Mammary epithelial cell (primary cell): ENCODE measurements at regions of chr1 and their contacts with region 1.

Region 1: DNA sequence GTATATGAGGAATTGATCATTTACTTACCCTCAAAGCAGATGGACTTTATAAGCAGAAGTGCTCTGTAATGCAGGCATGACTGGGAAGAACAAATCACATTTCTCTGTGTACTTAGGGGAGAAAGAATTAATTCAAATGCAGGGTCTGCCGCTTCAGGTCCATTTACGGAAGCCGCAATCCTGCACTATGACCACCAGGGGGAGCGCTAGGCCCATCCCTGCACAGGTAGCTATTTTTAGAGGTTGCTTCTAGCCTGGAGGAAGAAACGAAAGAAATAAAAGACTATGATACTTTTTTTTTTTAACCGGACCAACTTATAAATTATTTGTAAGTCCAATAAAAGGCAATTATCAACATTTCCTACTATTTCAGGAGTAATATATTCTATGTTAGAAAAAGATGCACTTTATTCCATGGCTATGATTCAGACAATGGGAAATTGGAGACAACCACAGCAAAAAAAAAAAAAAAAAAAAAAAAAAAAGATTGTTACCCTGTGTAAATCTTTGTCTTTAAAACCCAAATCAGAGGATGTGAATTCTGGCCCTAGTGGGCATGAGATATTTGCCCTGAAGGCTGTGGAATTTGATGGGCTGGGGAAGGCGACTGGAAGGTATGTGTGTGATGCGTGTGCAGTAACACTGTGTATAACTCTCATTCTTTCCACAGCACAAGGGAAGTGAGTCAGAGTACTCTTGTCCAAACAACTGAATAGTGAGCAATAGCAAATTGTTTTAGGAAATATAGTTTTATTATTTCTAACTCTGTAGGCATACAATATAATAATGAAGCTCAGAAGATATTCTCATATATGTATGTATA is 12.9 kb upstream of the FYB2 start:
- DNase-seq: peak; percentile 81
- H3K4me3 ChIP-seq: peak overlapping the region in 1 of 3 experiments; percentile 12
- H3K27ac ChIP-seq: peak overlapping the region; percentile 38
- H3K4me1 ChIP-seq: peaks cover 9% of the 10 kb centered on the region
- H3K27me3 ChIP-seq: no peaks in the 10 kb centered on the region
- CTCF ChIP-seq: peak; percentile 89 to 96

Region 2: DNA sequence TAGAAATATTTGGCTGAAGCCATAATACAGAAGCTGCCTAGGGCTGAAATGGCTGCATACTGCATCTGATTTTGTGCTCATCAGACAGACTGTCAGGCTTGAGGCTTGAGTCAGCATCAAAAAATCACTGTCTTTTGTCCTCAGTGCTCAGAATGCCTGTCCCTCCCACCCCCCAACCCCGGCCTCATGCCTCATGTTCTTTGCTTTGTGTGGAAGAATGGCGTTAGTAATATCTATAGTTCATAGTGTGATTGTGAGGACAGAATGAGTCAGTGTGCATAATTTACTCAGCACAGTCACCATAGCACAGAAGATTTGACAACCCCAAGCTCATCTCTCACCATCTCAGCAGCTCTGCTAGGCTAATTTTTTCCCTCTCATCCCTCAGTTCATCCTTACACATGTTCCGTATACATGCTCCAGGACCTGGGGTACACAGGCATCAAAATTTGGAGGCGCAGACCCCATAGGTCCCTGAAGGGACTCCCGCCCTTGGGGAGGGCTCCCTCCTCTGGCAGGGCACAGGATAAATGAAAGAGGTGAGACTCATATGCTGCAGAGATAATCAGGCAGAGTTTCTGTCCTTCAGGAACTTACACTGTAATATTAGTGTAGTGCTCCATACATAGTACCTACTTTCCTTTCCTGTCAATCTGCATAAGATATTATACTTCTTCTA is 292.8 kb after region 1 on chr1:
- CTCF ChIA-PET with region 1: no interaction called
- dilution Hi-C with region 1: no loop called
- in situ Hi-C with region 1: no loop called
- intact Hi-C with region 1: loop called (anchors 1 kb)
- DNase-seq: peak; percentile 65
- H3K4me3 ChIP-seq: no peak overlapping the region
- H3K27ac ChIP-seq: no peak overlapping the region
- H3K4me1 ChIP-seq: peaks cover 10% of the 10 kb centered on the region
- H3K27me3 ChIP-seq: no peaks in the 10 kb centered on the region
- CTCF ChIP-seq: peak in 1 of 2 donors; percentile 48

Region 3: DNA sequence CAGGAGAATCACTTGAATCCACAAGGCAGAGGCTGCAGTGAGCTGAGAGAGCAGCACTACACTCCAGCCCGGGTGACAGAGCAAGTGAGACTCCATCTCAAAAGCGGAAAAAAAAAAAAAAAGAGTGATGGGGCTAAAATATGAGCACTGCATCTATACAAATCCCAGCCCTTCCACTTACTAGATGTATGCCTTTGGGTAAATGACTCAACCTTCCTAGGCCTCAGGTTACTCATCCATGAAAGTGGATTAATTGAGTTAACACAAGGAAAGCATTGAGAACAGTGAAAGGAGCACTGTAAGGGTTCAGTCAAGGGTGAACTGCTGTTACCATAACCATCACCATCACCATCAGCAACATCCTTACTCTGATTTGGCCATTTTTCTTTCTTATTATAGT is 360.1 kb after region 1 on chr1:
- CTCF ChIA-PET with region 1: no interaction called
- dilution Hi-C with region 1: no loop called
- in situ Hi-C with region 1: no loop called
- intact Hi-C with region 1: no loop called
- DNase-seq: no peak
- H3K4me3 ChIP-seq: no peak overlapping the region
- H3K27ac ChIP-seq: no peak overlapping the region
- H3K4me1 ChIP-seq: no peaks in the 10 kb centered on the region
- H3K27me3 ChIP-seq: no peaks in the 10 kb centered on the region
- CTCF ChIP-seq: no peak

Region 4: GRCh38 chr1:57340334-57341070 is 508.4 kb after region 1 on chr1:
- CTCF ChIA-PET with region 1: no interaction called
- dilution Hi-C with region 1: no loop called
- in situ Hi-C with region 1: no loop called
- intact Hi-C with region 1: loop called (anchors 1 kb)
- DNase-seq: no peak
- H3K4me3 ChIP-seq: no peak overlapping the region
- H3K27ac ChIP-seq: no peak overlapping the region
- H3K4me1 ChIP-seq: no peaks in the 10 kb centered on the region
- H3K27me3 ChIP-seq: no peaks in the 10 kb centered on the region
- CTCF ChIP-seq: peak in 1 of 2 donors; percentile 20

Region 5: GRCh38 chr1:58035523-58035922 is 1203.4 kb after region 1 on chr1:
- CTCF ChIA-PET with region 1: no interaction called
- dilution Hi-C with region 1: no loop called
- in situ Hi-C with region 1: loop called in 1 of 2 experiments (anchors 25 kb)
- intact Hi-C with region 1: loop called (anchors 2 kb)
- DNase-seq: no peak
- H3K4me3 ChIP-seq: no peak overlapping the region
- H3K27ac ChIP-seq: no peak overlapping the region
- H3K4me1 ChIP-seq: no peaks in the 10 kb centered on the region
- H3K27me3 ChIP-seq: no peaks in the 10 kb centered on the region
- CTCF ChIP-seq: peak; percentile 9 to 39

Region 6: DNA sequence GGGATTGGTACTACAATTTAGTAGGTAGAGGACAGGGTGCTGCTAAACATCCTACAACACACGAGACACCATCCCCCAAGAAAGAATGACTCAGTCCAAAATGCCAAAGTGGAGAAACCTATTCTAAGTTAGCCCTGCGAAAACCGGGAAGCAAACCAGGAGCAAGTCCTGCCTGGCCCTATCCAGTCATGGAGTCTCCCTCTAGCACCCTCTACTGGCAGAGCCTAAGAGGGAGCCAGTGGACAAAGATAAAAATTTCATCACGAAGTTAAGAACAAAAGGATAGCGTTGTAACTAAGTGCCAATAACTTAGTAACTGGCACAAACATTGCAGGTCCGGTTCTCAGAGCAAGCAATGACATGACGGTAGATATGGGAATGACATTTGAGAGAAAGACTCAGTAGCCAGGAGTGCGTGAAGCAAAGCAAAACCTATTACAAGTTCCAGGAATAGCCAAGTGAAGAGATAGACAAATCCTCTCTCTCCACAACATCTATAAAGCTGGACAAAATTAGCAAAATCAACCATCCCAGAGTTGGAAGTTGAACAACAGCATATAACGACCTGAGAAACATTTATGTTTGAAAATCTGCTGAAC is 1331.0 kb after region 1 on chr1:
- CTCF ChIA-PET with region 1: no interaction called
- dilution Hi-C with region 1: no loop called
- in situ Hi-C with region 1: loop called in 1 of 2 experiments (anchors 25 kb)
- intact Hi-C with region 1: loop called (anchors 1 kb)
- DNase-seq: peak; percentile 69
- H3K4me3 ChIP-seq: no peak overlapping the region
- H3K27ac ChIP-seq: no peak overlapping the region
- H3K4me1 ChIP-seq: no peaks in the 10 kb centered on the region
- H3K27me3 ChIP-seq: no peaks in the 10 kb centered on the region
- CTCF ChIP-seq: peak; percentile 98 to 99